ENCODE measurements at regions of chr3 and their contacts with region 1.

Region 1: DNA sequence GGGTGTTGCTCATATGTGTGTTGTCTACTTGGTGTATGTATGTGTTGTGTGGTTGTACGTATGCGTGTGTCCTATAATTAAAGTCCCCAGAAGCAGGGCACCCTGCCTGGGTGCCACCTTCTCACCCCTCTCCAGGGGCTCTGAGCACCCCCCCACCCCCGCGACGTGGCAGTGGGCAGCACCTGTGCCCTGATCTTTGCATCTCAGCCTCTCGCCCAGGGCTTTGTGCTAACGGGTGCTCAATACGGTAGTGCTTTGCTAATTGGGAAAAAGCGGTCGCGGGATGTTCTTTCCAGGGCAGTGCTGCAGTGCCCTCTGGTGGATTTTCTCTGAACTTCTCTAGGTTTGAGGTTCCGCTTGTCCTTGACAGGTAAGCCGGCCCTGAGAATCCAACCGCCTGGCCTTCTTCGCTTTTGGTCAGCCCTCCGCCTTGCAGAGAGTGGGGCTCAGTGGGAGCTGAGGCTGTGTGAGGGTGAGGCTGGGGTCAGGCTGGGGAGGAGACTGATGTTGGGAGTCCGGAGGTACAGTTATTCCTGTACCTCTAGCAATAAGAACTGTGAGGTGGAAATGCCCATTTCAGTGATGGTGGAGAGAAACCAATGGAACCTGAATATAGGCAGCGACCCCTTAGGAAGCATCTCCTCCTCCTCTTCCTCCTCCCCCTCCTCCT is 17.6 kb upstream of the EPHB3 start:
- DNase-seq: peak; percentile 86
- H3K4me3 Mint-ChIP-seq: no peak overlapping the region
- H3K27ac Mint-ChIP-seq: no peak overlapping the region
- H3K4me1 Mint-ChIP-seq: peaks cover 7% of the 10 kb centered on the region
- H3K27me3 Mint-ChIP-seq: peaks cover 7% of the 10 kb centered on the region

Region 2: DNA sequence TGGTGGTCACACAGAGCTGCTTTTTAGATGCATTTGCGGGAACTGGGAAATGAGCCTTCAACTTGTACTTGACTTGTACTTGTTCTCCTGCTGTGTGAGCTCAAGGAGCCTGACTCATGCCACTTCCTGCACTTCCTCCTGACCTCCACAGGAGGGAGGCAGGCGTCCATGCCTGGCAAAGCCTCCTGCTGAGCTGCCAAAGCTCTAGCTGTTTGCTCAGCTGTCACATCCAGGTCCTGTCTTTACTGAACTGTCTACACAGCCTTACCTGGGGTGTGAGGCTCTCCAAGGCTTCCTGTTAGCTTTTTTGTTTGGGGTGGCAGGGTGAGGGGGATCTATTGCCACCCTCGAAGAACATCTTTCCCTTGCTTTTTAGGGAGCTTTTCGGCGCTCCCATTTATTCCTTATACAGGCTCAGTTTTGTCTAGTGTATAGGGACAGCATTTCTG is 172.4 kb before region 1 on chr3:
- CTCF ChIA-PET with region 1: interaction called, 72 read pairs
- POLR2A ChIA-PET with region 1: no interaction called
- intact Hi-C with region 1: loop called (anchors 1 kb)
- DNase-seq: peak; percentile 76
- H3K4me3 Mint-ChIP-seq: no peak overlapping the region
- H3K27ac Mint-ChIP-seq: no peak overlapping the region
- H3K4me1 Mint-ChIP-seq: peaks cover 15% of the 10 kb centered on the region
- H3K27me3 Mint-ChIP-seq: peaks cover 4% of the 10 kb centered on the region

Region 3: DNA sequence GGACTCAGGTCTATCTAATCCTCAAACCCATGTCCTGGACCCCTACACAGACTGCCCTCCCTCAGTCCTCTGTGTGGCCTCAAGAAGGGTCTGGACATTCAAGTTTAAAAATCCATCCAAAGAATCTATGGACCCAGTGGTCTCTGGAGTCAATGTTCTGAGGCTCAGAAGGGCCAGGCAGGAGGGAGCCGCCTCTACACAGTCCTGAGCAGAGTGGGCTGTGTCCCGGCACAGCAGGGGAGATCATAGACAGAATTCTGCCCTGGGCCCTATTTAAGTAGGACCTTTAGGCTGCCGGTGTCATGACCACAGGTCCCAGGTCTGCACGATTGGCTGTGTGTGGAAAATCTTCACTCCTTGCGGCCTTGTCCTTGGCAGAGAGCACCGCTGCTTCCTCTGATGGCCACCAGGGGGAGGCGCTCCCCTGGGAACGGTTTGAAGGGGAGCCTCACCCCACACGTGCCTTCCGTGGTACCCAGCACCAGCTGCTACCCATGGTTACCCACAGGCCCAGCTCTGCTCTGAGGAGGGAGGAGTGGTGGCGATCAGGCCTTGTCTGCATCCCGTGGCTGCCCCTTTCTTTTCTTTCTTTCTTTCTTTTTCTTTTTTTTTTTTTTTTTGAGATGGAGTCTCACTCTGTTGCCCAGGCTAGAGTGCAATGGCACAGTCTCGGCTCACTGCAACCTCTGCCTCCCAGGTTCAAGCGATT is 126.2 kb before region 1 on chr3:
- CTCF ChIA-PET with region 1: interaction called, 19 read pairs
- POLR2A ChIA-PET with region 1: no interaction called
- intact Hi-C with region 1: loop called (anchors 1 kb)
- DNase-seq: peak; percentile 79
- H3K4me3 Mint-ChIP-seq: no peak overlapping the region
- H3K27ac Mint-ChIP-seq: no peak overlapping the region
- H3K4me1 Mint-ChIP-seq: no peaks in the 10 kb centered on the region
- H3K27me3 Mint-ChIP-seq: no peaks in the 10 kb centered on the region

Region 4: DNA sequence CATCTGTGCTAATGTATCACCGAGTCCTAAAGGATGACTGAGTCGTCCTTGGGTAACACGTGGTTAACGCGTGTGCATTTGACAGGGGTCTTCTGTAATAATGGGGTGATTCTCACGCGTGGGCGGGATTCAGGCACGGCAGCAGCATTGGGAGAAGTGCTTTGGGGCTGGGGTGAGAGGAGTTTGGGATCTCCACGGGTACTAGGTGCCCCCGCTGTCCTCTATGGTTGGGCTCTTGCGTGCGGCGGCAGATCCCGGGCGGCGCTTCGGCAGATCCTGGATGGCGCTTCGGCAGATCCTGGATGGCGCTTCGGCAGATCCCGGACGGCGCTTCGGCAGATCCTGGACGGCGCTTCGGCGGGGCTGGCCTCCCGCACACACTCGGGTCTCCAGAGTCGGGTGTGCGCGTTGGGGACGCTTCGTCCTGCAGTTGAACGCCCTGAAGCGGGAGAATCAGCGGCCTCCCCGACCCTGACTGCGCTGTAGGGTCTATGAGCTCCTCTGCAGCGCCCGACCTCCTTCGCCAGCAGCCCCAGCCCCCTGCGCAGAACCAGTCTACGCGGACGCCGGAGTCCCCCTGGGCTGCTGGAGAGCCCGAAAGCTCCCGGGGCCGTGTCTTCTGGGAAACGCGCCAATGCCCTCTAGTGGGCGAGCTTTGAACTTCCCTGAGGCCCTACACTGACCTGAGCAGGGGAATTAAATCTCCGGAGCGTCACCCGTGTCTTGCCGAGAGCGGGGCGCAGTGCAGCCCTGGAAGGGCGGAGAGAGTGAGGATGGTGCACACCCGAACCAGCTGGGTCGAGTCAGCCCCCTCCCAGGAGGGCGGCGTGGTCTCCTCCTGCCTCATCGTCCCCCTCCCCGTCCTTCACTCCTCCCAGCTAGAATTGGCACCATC is 30.5 kb before region 1 on chr3:
- CTCF ChIA-PET with region 1: interaction called, 77 read pairs
- POLR2A ChIA-PET with region 1: no interaction called
- intact Hi-C with region 1: loop called (anchors 2 kb)
- DNase-seq: peak; percentile 88
- H3K4me3 Mint-ChIP-seq: peak overlapping the region; percentile 39
- H3K27ac Mint-ChIP-seq: no peak overlapping the region
- H3K4me1 Mint-ChIP-seq: peaks cover 8% of the 10 kb centered on the region
- H3K27me3 Mint-ChIP-seq: peaks cover 46% of the 10 kb centered on the region

Region 5: DNA sequence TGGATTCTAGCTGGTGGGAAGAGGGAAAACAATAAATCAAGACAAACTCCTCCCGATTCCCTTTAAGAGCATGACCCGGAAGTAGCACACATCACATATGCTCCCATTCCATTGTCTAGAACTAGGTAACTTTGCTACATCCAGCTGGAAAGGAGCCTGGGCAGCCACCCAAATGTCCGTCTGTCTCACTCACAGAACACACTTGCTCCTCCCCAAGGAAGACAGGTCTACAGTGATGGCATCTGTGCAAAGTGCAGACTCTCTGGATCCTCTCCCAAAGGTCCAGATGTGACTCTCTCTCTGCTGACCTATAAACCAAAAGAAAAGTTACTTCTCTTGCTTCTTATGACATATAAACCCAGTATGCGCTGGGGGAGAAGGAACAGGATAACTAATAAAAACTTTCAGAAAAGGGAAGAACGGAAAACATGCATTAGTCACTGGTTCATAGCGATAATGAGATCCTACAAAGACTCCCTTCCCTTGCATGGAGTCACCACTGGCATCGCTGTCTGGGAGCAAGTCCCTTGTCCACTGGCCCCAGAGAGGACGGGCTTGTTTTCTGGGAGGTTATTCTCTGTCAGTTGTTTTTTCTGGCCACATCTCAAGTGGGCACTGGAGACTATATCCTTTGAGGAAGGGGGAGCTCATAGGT is 12.2 kb before region 1 on chr3:
- CTCF ChIA-PET with region 1: interaction called, 24 read pairs
- POLR2A ChIA-PET with region 1: no interaction called
- intact Hi-C with region 1: no loop called
- DNase-seq: no peak
- H3K4me3 Mint-ChIP-seq: no peak overlapping the region
- H3K27ac Mint-ChIP-seq: no peak overlapping the region
- H3K4me1 Mint-ChIP-seq: no peaks in the 10 kb centered on the region
- H3K27me3 Mint-ChIP-seq: peaks cover 19% of the 10 kb centered on the region

Region 6: DNA sequence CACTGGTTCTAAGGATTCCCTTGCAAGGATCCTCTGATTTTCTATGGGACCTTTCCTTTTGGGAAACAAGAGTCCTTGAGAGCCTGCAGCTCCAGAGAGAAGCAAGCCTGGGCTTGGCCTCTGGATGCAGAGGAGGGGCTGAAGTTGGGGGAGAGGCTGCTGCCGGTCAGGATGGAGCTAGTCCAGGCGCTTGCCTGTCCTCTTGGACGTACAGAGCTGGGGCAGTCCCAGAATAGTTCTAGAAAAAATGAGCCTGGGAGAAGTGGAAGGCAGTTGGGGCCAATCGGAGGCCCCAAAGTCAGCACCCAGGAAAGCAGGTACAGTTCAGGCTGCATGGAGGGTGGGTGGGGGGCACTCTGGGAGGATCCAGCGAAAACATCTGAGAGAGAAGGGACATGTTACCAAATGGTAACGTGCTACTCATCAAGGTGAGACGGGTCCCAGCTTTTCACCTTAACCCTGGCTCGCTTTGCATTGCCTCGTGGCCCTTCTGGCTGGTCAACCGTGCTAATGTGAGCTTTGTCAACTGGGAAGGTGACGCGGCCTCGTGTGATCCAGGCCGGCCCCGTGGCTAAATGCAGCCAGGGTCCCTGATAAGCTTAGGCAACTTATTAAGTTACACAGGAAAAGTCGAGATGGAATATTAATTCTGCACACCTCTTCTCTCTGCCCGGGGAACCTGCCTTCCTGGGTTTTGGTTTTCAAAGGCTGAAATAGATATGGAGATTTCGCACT is 206.5 kb after region 1 on chr3:
- CTCF ChIA-PET with region 1: no interaction called
- POLR2A ChIA-PET with region 1: no interaction called
- intact Hi-C with region 1: no loop called
- DNase-seq: no peak
- H3K4me3 Mint-ChIP-seq: no peak overlapping the region
- H3K27ac Mint-ChIP-seq: no peak overlapping the region
- H3K4me1 Mint-ChIP-seq: peaks cover 9% of the 10 kb centered on the region
- H3K27me3 Mint-ChIP-seq: peaks cover 12% of the 10 kb centered on the region

Region 7: GRCh38 chr3:185200635-185201034 is 656.7 kb after region 1 on chr3:
- CTCF ChIA-PET with region 1: no interaction called
- POLR2A ChIA-PET with region 1: no interaction called
- intact Hi-C with region 1: no loop called
- DNase-seq: no peak
- H3K4me3 Mint-ChIP-seq: no peak overlapping the region
- H3K27ac Mint-ChIP-seq: no peak overlapping the region
- H3K4me1 Mint-ChIP-seq: no peaks in the 10 kb centered on the region
- H3K27me3 Mint-ChIP-seq: no peaks in the 10 kb centered on the region

Measured in activated CD4-positive, alpha-beta memory T cell treated with anti-CD3 and anti-CD28 coated beads for 36 hours (primary cell).